MCF 10A (cell line): ENCODE measurements at regions of chr6 and their contacts with region 1.

Region 1: DNA sequence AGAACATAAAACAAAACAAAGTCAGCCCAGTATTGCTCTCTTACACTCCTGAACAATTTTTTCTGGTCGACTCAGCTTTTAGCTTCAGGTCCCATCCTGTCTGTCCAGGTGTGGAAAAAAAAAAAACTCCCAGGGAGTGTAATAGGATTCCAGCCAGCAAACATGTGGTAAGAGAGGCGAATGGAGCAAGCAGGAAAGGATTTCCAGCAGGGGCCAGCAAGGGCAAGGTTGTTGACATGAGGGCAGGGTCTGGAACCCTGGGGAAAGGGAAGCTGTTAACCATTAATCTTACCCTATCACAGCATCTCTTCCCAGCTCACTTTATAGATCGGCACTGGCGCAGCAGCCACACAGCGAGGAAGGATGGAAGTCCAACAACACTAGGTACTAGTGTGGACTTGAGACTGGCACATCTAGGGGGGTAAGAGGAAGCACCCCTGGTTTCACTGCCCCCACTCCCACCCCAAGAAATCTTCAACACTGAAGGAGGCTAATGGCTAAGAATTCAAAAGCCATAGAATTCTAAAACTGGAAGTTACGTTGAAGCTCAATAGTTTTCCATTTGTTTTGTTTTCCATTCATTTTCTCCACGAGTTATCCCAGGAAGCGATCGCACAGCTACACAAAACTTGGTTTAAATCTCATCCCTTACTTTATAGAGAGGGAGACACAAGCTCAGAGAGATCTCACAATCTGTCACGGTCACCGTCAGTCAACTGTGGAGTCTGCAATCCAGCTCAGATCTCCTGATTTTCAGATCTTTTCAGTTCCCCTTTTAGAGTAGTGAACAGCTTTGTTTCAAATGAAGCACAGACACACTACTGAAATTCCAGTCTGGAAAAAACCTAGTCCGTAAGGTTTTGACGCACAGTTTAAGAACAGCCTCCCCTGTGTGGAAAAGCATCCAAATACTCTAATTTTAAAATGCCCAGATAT is 53.3 kb downstream of the SLC22A23 start:
- DNase-seq: peak; percentile 72
- H3K4me3 Mint-ChIP-seq: no peak overlapping the region
- H3K27ac Mint-ChIP-seq: peak overlapping the region; percentile 61
- H3K4me1 Mint-ChIP-seq: peaks cover 40% of the 10 kb centered on the region
- H3K27me3 Mint-ChIP-seq: no peaks in the 10 kb centered on the region
- CTCF ChIP-seq: no peak

Region 2: GRCh38 chr6:3125815-3126214 is 277.7 kb before region 1 on chr6:
- CTCF ChIA-PET with region 1: no interaction called
- POLR2A ChIA-PET with region 1: no interaction called
- intact Hi-C with region 1: no loop called
- DNase-seq: no peak
- H3K4me3 Mint-ChIP-seq: no peak overlapping the region
- H3K27ac Mint-ChIP-seq: no peak overlapping the region
- H3K4me1 Mint-ChIP-seq: no peaks in the 10 kb centered on the region
- H3K27me3 Mint-ChIP-seq: no peaks in the 10 kb centered on the region
- CTCF ChIP-seq: no peak

Region 3: GRCh38 chr6:3390698-3391097 is 12.8 kb before region 1 on chr6:
- CTCF ChIA-PET with region 1: interaction called, 11 read pairs
- POLR2A ChIA-PET with region 1: interaction called, 41 read pairs
- intact Hi-C with region 1: no loop called
- DNase-seq: peak; percentile 99
- H3K4me3 Mint-ChIP-seq: peak overlapping the region; percentile 49
- H3K27ac Mint-ChIP-seq: no peak overlapping the region
- H3K4me1 Mint-ChIP-seq: peaks cover 7% of the 10 kb centered on the region
- H3K27me3 Mint-ChIP-seq: no peaks in the 10 kb centered on the region
- CTCF ChIP-seq: no peak

Region 4: GRCh38 chr6:3419624-3420272 is 16.2 kb after region 1 on chr6:
- CTCF ChIA-PET with region 1: interaction called, 4 read pairs
- POLR2A ChIA-PET with region 1: interaction called, 14 read pairs
- intact Hi-C with region 1: no loop called
- DNase-seq: peak; percentile 73
- H3K4me3 Mint-ChIP-seq: no peak overlapping the region
- H3K27ac Mint-ChIP-seq: no peak overlapping the region
- H3K4me1 Mint-ChIP-seq: peaks cover 28% of the 10 kb centered on the region
- H3K27me3 Mint-ChIP-seq: no peaks in the 10 kb centered on the region
- CTCF ChIP-seq: no peak

Region 5: DNA sequence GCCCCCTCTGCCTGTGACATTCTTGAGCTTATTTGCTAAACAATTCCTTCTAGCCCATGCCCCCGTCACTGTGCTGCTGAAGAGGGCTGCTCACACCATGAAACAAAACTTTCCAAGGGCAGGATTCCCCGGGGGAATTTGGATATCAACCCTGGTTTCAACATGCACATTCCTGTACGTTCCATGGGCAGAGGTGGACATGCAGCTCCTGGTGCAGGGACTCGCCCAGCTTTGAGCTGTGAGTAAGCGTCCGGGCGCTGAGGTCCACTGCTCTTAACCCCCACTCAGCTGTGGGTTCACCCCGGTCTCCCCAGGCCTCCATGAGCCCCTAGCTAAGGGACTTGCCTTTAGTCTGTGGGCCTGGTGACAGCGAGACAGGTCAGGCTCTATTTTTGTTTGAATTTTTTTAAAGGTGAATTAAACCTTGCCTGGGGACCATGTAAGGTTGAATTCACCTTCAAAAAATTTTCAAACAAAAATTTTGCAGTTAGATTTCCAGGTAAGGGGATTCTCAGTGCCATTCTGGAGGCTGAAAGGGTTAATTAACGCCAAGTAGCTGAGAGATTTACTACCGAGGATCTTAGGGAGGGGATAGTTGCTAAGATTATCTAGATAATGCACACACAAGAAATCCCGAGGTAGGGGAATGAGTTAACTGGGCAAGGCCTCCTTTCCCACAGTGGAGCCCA is 123.6 kb after region 1 on chr6:
- CTCF ChIA-PET with region 1: interaction called, 9 read pairs
- POLR2A ChIA-PET with region 1: interaction called, 21 read pairs
- intact Hi-C with region 1: no loop called
- DNase-seq: peak; percentile 91
- H3K4me3 Mint-ChIP-seq: peak overlapping the region; percentile 18
- H3K27ac Mint-ChIP-seq: peak overlapping the region; percentile 81
- H3K4me1 Mint-ChIP-seq: peaks cover 35% of the 10 kb centered on the region
- H3K27me3 Mint-ChIP-seq: no peaks in the 10 kb centered on the region
- CTCF ChIP-seq: no peak

Region 6: GRCh38 chr6:3732345-3733141 is 329.0 kb after region 1 on chr6:
- CTCF ChIA-PET with region 1: interaction called, 20 read pairs
- POLR2A ChIA-PET with region 1: interaction called, 3 read pairs
- intact Hi-C with region 1: loop called (anchors 2 kb)
- DNase-seq: peak; percentile 80
- H3K4me3 Mint-ChIP-seq: no peak overlapping the region
- H3K27ac Mint-ChIP-seq: no peak overlapping the region
- H3K4me1 Mint-ChIP-seq: peaks cover 9% of the 10 kb centered on the region
- H3K27me3 Mint-ChIP-seq: no peaks in the 10 kb centered on the region
- CTCF ChIP-seq: peak; percentile 94